Activated T-helper 1 cell treated with anti-CD3 and anti-CD28 coated beads, Interleukin-12 subunit alpha, Interleukin-12 subunit beta, Interleukin-2, Interleukin-4 antibody, amounts not matched to agents 30 ng/mL and 10 ng/mL and 1 ng/mL, durations not matched to agents 14 hours and 24 hours and 36 hours (primary cell): ENCODE measurements at regions of chr14 and their contacts with region 1.

Region 1: DNA sequence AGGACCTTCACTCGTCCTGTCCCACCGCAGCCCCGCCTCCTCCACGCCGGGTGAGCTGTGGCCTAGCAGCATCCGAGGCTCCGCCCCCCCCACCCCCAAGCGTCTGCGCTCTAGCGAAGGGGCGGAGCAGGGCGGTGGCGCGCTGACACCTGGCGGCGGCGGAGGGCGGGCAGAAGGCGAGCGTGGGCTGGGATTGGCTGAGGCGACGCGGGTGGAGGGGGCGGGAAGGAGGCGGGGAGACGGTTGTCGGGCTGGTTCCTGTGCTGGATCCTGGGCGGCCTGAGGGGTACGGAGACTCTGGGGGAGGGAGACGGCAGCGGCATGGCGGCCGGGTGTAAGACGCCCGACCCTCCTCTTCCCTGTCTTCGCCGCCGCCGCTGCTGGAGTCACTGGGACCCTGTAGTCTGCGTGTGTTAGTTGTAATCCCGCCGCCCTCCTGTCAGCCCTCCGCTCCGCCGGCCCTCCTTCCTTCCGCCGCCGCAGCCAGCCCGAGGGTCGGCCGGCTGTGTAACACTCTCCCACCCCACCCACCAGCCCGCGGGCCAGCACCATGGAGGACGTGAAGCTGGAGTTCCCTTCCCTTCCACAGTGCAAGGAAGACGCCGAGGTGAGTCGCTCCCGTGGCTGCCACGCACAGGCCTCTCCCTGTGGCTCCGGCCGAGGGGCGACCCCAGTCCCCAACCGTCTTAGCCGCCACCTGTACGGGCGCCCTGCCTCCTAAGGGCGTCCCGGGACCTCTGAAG is at the start of gene STYX:
- DNase-seq: peak; percentile 96
- H3K4me3 Mint-ChIP-seq: peak within 1 kb of the TSS; percentile 91
- H3K27ac Mint-ChIP-seq: peak within 1 kb of the TSS; percentile 76
- H3K4me1 Mint-ChIP-seq: peaks cover 37% of the 10 kb centered on the region
- H3K27me3 Mint-ChIP-seq: no peaks in the 10 kb centered on the region
- total RNA-seq, gene STYX: 18.7 and 21.3 TPM in 2 replicates

Region 2: GRCh38 chr14:52650774-52651173 is 79.3 kb before region 1 on chr14:
- intact Hi-C with region 1: loop called (anchors 5 kb)
- DNase-seq: no peak
- H3K4me3 Mint-ChIP-seq: no peak overlapping the region
- H3K27ac Mint-ChIP-seq: no peak overlapping the region
- H3K4me1 Mint-ChIP-seq: peaks cover 4% of the 10 kb centered on the region
- H3K27me3 Mint-ChIP-seq: no peaks in the 10 kb centered on the region

Region 3: DNA sequence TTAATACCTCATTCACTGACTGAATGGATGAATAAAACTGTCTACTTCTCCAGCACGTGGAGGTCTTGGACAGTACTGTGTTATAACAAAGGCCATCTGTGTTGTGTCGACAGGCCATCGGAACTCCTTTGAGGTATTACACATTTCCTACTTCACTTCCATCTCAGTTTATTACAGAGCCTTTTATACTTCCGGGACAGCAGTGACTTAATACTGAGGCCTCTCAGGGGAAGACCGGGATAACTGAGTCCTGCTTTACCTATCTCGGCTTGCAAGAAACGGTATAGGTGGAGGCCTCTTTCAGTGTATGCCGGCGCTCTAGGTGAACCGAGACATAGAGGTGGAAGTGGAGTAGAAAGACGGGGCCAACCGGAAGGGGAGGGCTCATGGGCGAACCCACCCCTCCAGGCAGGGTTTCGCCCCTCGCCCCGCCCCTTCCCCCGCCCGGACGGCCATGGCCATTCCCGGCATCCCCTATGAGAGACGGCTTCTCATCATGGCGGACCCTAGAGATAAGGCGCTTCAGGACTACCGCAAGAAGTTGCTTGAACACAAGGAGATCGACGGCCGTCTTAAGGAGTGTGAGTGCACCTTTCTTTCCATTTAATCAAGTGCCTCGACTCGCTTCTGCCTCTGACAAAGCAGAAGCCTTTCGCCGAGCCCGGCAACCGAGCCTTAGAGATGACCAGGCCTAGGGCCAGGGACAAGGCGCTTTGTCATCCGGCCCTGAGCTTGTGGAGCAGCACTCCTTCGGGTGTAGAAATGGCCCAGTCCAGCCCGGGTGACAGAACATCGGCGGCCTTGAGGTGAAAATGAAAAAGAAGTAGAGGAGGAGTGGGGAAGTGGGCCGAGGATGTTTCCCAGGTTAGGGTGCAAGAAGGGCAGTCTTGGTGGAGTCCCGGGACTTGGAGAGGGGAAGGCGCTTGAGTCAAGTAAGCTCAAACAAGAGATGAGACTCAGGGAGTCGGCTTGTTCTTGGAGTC is 23.1 kb before region 1 on chr14 and contains the start of gene PSMC6:
- intact Hi-C with region 1: loop called (anchors 1 kb)
- DNase-seq: peak; percentile 86
- H3K4me3 Mint-ChIP-seq: peak within 1 kb of the TSS; percentile 100
- H3K27ac Mint-ChIP-seq: peak within 1 kb of the TSS; percentile 97
- H3K4me1 Mint-ChIP-seq: peaks cover 41% of the 10 kb centered on the region
- H3K27me3 Mint-ChIP-seq: peaks cover 3% of the 10 kb centered on the region
- total RNA-seq, gene PSMC6: 130 and 132 TPM in 2 replicates

Region 4: DNA sequence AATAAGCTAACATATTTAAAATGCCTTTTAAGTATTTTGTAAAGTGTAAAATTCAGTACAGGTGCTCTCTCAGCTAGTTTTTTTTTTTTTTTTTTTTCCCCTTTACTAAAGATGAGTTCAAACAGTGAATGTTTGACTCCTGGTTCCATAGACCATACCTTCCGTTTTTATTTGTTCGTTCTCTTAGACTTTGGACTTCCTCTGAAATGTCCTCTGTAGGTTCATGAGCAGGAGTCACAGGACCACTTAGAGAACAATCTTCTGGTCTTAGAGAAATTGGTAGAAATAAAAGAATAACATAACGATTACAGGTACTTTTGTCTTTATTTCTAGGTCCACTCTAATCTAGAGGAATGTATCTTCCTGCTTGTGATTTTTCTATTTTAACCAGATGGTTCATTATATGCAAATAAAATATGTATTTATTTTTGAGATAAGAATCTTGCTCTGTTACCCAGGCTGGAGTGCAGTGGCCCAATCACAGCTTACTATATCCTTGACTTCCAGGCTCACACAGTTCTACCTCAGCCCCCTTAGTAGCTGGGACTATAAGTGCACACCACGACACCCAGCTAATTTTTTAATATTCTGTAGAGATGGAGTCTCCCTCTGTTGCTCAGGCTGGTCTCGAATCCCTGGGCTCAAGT is 25.6 kb after region 1 on chr14:
- intact Hi-C with region 1: no loop called
- DNase-seq: no peak
- H3K4me3 Mint-ChIP-seq: no peak overlapping the region
- H3K27ac Mint-ChIP-seq: no peak overlapping the region
- H3K4me1 Mint-ChIP-seq: no peaks in the 10 kb centered on the region
- H3K27me3 Mint-ChIP-seq: no peaks in the 10 kb centered on the region

Region 5: DNA sequence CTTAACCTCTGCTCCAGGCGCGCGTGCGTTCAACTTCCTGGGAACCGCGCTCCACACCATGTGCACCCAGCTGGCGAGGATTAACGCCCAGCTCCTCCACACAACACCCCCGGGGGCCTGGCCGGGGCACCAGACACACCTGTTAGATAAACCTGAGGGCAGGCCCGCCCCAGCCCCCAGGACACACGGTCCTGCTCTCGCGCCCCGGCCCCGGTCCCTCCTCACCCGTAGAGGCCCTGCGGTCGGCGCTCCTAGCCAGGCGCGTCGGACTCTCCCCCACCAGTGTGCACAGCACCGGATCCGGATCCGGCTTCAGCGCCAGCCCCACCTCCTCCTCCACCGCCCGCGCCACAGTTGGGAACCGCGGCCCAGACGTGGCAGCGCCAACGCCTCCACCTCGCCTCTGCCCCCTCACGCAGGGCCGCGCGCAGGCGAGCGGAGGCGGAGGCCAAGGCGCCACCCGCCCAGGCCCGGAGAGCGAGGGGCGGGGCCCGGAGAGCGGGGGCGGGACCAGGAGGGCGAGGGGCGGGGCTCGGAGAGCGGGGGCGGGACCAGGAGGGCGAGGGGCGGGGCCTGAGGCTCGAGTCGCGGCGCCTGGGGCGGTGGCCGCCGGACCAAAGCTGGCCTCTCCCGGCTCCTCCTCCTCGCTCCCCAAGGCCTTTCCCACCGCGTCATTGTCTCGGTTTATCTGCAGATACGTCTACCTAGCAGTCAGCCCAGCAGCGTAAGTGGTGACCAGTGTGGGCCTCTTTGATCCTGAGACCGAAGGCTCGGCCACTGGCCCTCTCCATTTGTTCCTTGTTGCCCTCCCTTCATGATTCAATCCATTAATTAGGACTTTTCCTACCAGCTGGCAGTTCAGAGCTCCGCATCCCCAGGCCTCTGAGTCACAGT is 61.4 kb after region 1 on chr14 and contains the start of gene GNPNAT1:
- intact Hi-C with region 1: loop called (anchors 1 kb)
- DNase-seq: peak; percentile 85
- H3K4me3 Mint-ChIP-seq: peak within 1 kb of the TSS; percentile 92
- H3K27ac Mint-ChIP-seq: peak within 1 kb of the TSS; percentile 86
- H3K4me1 Mint-ChIP-seq: peaks cover 32% of the 10 kb centered on the region
- H3K27me3 Mint-ChIP-seq: no peaks in the 10 kb centered on the region
- total RNA-seq, gene GNPNAT1: 26.0 and 26.4 TPM in 2 replicates

Region 6: DNA sequence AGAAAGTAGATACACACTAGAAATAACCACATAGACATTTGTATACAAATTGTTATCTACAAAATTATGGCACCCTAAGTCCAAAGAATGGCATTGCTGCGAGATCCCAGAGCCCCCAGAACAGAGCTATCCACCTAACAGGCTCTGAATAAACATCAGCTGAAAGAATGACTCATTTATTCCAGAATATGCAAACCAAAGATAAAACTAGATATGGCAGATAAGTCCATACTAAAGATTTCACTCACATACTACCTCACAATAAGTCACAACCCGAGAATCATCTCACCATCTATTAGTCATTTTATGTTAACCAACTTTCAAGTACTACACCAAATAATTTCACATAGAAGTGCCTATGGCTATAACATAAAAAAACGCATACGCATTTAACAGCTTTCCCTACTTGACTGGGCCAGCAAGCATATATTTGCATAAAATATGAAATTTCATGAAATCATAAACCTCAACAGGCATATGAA is 1705.4 kb after region 1 on chr14:
- intact Hi-C with region 1: loop called (anchors 5 kb)
- DNase-seq: no peak
- H3K4me3 Mint-ChIP-seq: peak overlapping the region; percentile 74
- H3K27ac Mint-ChIP-seq: peak overlapping the region; percentile 89
- H3K4me1 Mint-ChIP-seq: peaks cover 73% of the 10 kb centered on the region
- H3K27me3 Mint-ChIP-seq: no peaks in the 10 kb centered on the region

Region 7: GRCh38 chr14:54627540-54628363 is 1897.7 kb after region 1 on chr14:
- intact Hi-C with region 1: no loop called
- DNase-seq: peak; percentile 36
- H3K4me3 Mint-ChIP-seq: peak overlapping the region; percentile 62
- H3K27ac Mint-ChIP-seq: peak overlapping the region; percentile 49
- H3K4me1 Mint-ChIP-seq: peaks cover 36% of the 10 kb centered on the region
- H3K27me3 Mint-ChIP-seq: no peaks in the 10 kb centered on the region